PC-3 (cell line): ENCODE measurements at regions of chr18 and their contacts with region 1.

Region 1: DNA sequence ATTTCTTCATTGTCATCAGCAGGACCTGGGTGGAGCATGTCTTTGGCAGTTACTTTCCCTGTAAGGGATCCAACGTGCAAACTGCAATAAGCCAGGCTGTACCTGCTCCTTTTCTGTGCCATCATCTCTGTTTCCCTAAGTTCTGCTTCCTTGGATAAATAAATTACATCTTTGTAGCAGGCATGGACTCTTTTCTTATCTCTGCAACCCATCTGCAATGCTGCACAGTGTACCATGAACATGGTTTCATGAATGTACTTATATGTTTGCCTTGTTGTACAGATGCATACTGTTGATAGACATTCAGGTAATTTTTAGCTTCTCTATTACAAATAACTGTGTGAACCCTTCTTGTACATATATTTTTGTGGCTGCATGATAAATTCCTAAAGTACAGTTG is 616.7 kb upstream of the PIK3C3 start:
- DNase-seq: no peak
- ATAC-seq: no peak
- H3K4me3 ChIP-seq: no peak overlapping the region
- H3K27ac ChIP-seq: no peak overlapping the region
- H3K4me1 ChIP-seq: no peaks in the 10 kb centered on the region
- H3K27me3 ChIP-seq: no peaks in the 10 kb centered on the region
- CTCF ChIP-seq: no peak

Region 2: GRCh38 chr18:40307627-40308026 is 1030.7 kb before region 1 on chr18:
- CTCF ChIA-PET with region 1: no interaction called
- POLR2A ChIA-PET with region 1: no interaction called
- intact Hi-C with region 1: no loop called
- DNase-seq: no peak
- ATAC-seq: no peak
- H3K4me3 ChIP-seq: no peak overlapping the region
- H3K27ac ChIP-seq: no peak overlapping the region
- H3K4me1 ChIP-seq: no peaks in the 10 kb centered on the region
- H3K27me3 ChIP-seq: no peaks in the 10 kb centered on the region
- CTCF ChIP-seq: no peak

Region 3: DNA sequence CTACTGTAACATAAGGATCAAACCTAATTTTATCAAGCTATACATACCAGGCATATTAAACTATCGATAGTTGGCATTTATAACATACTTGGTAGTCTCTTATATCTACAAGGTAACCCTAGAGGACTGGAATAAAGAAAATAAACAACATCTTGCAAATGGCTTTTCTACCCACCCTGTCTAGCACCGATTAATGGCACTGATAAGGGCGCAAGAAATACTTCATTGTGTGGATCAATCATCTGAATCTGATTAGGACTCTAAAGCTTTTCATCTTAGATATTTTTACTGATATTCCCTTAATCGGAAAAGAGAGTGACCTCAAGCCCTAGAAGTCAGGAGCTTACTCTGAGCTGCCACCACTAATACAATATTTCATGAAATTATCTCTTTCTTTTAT is 845.0 kb before region 1 on chr18:
- CTCF ChIA-PET with region 1: no interaction called
- POLR2A ChIA-PET with region 1: interaction called, 15 read pairs
- intact Hi-C with region 1: no loop called
- DNase-seq: no peak
- ATAC-seq: no peak
- H3K4me3 ChIP-seq: no peak overlapping the region
- H3K27ac ChIP-seq: no peak overlapping the region
- H3K4me1 ChIP-seq: no peaks in the 10 kb centered on the region
- H3K27me3 ChIP-seq: no peaks in the 10 kb centered on the region
- CTCF ChIP-seq: no peak